Activated CD8-positive, alpha-beta memory T cell treated with anti-CD3 and anti-CD28 coated beads, Interleukin-2, amount 10 ng/mL, durations not matched to agents 7 days and 5 days (primary cell): ENCODE measurements at regions of chr9 and their contacts with region 1.

Region 1: DNA sequence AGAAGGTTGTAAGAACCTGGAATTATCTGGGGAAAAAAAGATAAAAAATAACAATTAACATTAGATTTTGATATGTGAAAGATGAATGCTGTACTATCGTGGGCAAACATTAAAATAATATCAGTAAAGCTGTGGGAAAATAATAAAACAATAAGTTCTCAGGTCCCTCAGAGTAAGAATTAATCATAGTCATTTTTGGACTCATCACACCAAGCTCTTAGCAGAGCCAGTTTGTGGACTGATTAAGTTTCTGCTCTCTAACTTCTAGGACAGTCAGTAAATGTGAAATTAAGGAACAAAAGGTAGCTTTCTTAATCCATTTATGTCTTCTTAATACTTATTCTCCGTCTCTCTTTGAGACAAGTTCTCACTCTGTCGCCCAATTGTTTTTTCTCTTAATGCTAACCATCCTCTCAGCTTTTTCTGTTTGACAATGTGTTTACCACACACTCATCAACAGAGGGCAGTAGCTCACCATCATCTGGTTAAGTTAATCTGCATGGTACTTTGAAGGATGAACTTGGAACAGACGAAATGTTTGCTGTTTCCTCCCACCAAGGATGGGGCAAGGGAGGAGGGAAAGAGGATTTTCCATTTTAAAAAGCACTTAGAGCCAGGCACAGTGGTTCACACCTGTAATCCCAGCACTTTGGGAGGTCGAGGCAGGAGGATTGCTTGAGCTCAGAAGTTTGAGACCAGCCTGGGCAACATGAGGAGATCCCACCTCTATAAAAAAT is 5.3 kb upstream of the ACO1 start:
- DNase-seq: peak; percentile 64
- ATAC-seq: peak; percentile 82
- H3K4me3 Mint-ChIP-seq: peak overlapping the region; percentile 2
- H3K27ac Mint-ChIP-seq: no peak overlapping the region
- H3K4me1 Mint-ChIP-seq: peaks cover 15% of the 10 kb centered on the region
- H3K27me3 Mint-ChIP-seq: peaks cover 36% of the 10 kb centered on the region

Region 2: GRCh38 chr9:32398207-32398606 is 19.0 kb after region 1 on chr9:
- CTCF ChIA-PET with region 1: interaction called, 12 read pairs
- DNase-seq: no peak
- ATAC-seq: no peak
- H3K4me3 Mint-ChIP-seq: no peak overlapping the region
- H3K27ac Mint-ChIP-seq: no peak overlapping the region
- H3K4me1 Mint-ChIP-seq: no peaks in the 10 kb centered on the region
- H3K27me3 Mint-ChIP-seq: no peaks in the 10 kb centered on the region

Region 3: GRCh38 chr9:32426278-32426939 is 47.2 kb after region 1 on chr9:
- CTCF ChIA-PET with region 1: interaction called, 23 read pairs
- DNase-seq: no peak
- ATAC-seq: no peak
- H3K4me3 Mint-ChIP-seq: no peak overlapping the region
- H3K27ac Mint-ChIP-seq: no peak overlapping the region
- H3K4me1 Mint-ChIP-seq: peaks cover 2% of the 10 kb centered on the region
- H3K27me3 Mint-ChIP-seq: no peaks in the 10 kb centered on the region

Region 4: GRCh38 chr9:32526041-32526706 is 147.0 kb after region 1 on chr9 and contains the start of gene RIGI:
- CTCF ChIA-PET with region 1: interaction called, 38 read pairs
- DNase-seq: peak; percentile 90
- ATAC-seq: peak; percentile 80
- H3K4me3 Mint-ChIP-seq: peak within 1 kb of the TSS; percentile 88
- H3K27ac Mint-ChIP-seq: peak within 1 kb of the TSS; percentile 96
- H3K4me1 Mint-ChIP-seq: peaks cover 55% of the 10 kb centered on the region
- H3K27me3 Mint-ChIP-seq: no peaks in the 10 kb centered on the region
- total RNA-seq, gene RIGI: 27.1 to 40.0 TPM

Region 5: GRCh38 chr9:32566770-32567169 is 187.6 kb after region 1 on chr9:
- CTCF ChIA-PET with region 1: interaction called, 454 read pairs
- DNase-seq: no peak
- ATAC-seq: no peak
- H3K4me3 Mint-ChIP-seq: no peak overlapping the region
- H3K27ac Mint-ChIP-seq: no peak overlapping the region
- H3K4me1 Mint-ChIP-seq: peaks cover 30% of the 10 kb centered on the region
- H3K27me3 Mint-ChIP-seq: no peaks in the 10 kb centered on the region

Region 6: DNA sequence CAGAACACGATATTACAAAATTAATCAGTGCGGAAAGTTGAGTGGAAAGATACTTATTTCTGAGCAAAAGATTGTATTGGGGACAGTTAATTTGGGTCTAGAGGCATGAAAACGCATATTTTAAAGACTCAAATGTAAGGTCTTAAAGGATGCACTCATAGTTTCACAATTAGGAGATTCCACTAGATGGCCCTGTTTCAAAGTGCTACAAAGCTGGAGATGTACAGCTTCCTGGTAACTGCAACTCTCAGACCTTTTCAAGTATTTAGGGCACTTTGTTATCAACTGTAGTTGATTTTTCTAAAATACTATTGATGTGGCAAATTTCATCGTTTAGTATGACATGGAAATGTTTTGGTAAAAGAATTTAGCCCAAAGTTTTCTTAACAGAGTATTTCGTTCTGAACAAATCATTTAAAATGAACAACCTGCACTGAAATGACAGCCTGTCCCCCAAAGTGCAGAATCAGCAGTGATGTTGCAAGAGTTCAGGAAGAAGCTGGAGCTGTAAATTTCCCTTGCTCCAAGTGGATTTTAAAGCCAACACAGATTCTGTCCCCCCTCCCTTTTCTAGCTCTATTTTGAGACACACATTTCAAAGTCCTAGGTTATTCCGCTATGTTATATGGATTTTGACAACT is 210.0 kb after region 1 on chr9:
- CTCF ChIA-PET with region 1: interaction called, 83 read pairs
- DNase-seq: no peak
- ATAC-seq: no peak
- H3K4me3 Mint-ChIP-seq: no peak overlapping the region
- H3K27ac Mint-ChIP-seq: no peak overlapping the region
- H3K4me1 Mint-ChIP-seq: no peaks in the 10 kb centered on the region
- H3K27me3 Mint-ChIP-seq: peaks cover 42% of the 10 kb centered on the region